Calu3 (cell line): ENCODE measurements at regions of chr10 and their contacts with region 1.

Region 1: GRCh38 chr10:101067356-101068083 is 5.7 kb downstream of the KAZALD1 start:
- DNase-seq: peak; percentile 78
- H3K4me3 Mint-ChIP-seq: peak overlapping the region; percentile 86
- H3K27ac Mint-ChIP-seq: no peak overlapping the region
- H3K4me1 Mint-ChIP-seq: peaks cover 21% of the 10 kb centered on the region
- H3K27me3 Mint-ChIP-seq: peaks cover 11% of the 10 kb centered on the region
- CTCF ChIP-seq: peak; percentile 67

Region 2: DNA sequence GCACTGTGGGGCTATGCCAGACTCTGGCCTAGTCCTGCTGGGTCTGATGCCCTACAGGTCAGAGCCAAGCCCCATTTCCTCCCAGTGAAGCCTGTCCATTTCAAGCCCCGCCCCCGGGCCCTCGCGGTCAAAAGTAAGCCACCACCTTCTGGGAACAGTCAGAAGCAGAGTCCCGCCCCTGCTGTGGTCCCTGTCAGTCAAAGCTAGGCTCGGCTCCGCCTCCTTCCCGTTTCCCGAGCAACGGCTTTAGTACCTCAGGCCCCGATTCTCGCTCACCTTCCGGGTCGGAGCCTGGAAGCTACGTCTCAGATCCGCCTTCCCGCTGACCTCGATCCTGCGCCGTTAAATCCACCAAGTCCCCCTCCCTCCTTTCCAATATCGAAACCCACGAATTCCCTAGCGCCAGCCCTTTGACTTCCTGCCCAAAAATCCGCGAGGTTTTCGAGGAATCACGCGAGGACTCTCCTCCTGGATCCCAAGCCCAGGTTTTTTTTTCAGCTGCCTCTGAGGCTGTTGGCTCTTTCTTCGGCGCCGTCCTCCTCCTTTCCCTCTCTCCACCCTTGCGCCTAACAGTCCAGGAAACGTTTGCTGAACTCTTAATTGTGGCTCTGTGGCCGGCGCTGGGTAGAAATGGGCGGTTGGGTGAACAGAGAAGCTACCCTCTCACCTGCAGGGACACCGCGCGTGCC is 24.7 kb before region 1 on chr10:
- CTCF ChIA-PET with region 1: interaction called, 26 read pairs
- intact Hi-C with region 1: no loop called
- DNase-seq: peak; percentile 94
- H3K4me3 Mint-ChIP-seq: peak overlapping the region; percentile 88
- H3K27ac Mint-ChIP-seq: peak overlapping the region; percentile 99
- H3K4me1 Mint-ChIP-seq: peaks cover 25% of the 10 kb centered on the region
- H3K27me3 Mint-ChIP-seq: peaks cover 14% of the 10 kb centered on the region
- CTCF ChIP-seq: no peak

Region 3: GRCh38 chr10:101050208-101051069 is 17.1 kb before region 1 on chr10:
- CTCF ChIA-PET with region 1: interaction called, 20 read pairs
- intact Hi-C with region 1: no loop called
- DNase-seq: peak; percentile 83
- H3K4me3 Mint-ChIP-seq: peak overlapping the region; percentile 31
- H3K27ac Mint-ChIP-seq: no peak overlapping the region
- H3K4me1 Mint-ChIP-seq: peaks cover 8% of the 10 kb centered on the region
- H3K27me3 Mint-ChIP-seq: peaks cover 38% of the 10 kb centered on the region
- CTCF ChIP-seq: peak; percentile 57

Region 4: DNA sequence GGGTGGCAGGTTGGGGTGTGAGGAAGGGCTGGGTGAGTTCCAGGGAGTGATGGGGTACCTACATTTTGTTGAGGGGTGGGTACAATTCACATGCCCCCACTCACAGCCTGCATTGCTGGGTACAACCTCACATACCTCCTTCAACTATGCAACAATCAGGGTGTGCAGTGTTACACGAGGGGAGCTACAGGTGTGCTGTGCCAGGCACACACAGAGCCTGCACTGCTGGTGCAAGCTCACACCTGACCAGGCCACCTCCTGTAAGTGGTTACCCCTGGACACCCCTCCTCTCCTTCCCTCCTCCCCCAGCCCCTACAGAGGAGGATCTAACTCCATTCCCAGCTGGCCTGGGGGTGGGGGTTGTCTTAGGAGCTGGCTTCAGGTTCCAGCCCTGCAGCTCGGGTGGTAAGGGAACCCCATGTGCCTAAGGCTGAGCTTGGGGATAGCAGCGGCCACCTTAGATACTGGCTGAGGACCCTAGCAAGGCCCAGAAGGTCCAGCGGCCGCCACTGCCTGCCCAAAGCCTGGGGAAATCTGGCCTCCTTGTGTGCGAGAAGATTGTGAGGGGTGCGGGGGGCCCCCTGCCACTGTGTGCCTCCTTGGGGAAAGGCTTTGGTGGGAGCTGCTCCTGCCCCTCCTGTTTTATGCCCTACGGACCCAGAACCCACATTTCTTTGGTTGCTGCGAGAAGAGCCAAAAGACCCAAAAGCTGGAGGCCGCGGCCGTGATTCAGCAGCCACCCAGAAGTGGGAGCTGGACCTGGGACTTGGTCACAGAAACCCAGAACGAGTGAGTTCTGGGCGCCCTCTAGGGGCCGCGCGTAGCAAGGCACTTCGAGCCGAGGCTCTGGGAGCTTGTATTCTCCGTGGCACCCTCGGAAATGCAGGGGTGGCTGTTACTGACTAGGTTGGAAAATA is 74.4 kb after region 1 on chr10:
- CTCF ChIA-PET with region 1: interaction called, 10 read pairs
- intact Hi-C with region 1: no loop called
- DNase-seq: peak; percentile 83
- H3K4me3 Mint-ChIP-seq: no peak overlapping the region
- H3K27ac Mint-ChIP-seq: no peak overlapping the region
- H3K4me1 Mint-ChIP-seq: peaks cover 11% of the 10 kb centered on the region
- H3K27me3 Mint-ChIP-seq: peaks cover 60% of the 10 kb centered on the region
- CTCF ChIP-seq: peak; percentile 72